ENCODE measurements at regions of chr12 and their contacts with region 1.

Region 1: GRCh38 chr12:50614167-50614759 is 109.5 kb downstream of the DIP2B start:
- DNase-seq: peak in 1 of 2 experiments; percentile 44
- H3K4me3 ChIP-seq: no peak overlapping the region
- H3K4me3 Mint-ChIP-seq: no peak overlapping the region
- H3K27ac Mint-ChIP-seq: no peak overlapping the region
- H3K4me1 ChIP-seq: peaks cover 69% of the 10 kb centered on the region
- H3K4me1 Mint-ChIP-seq: peaks cover 46% of the 10 kb centered on the region
- H3K27me3 ChIP-seq: no peaks in the 10 kb centered on the region
- H3K27me3 Mint-ChIP-seq: no peaks in the 10 kb centered on the region
- CTCF ChIP-seq: no peak

Region 2: GRCh38 chr12:50174971-50175715 is 439.1 kb before region 1 on chr12:
- CTCF ChIA-PET with region 1: no interaction called
- POLR2A ChIA-PET with region 1: no interaction called
- intact Hi-C with region 1: no loop called
- DNase-seq: peak in 1 of 2 experiments; percentile 80
- H3K4me3 ChIP-seq: no peak overlapping the region
- H3K4me3 Mint-ChIP-seq: no peak overlapping the region
- H3K27ac Mint-ChIP-seq: no peak overlapping the region
- H3K4me1 ChIP-seq: peaks cover 6% of the 10 kb centered on the region; the same call in 1 of the 2 replicates
- H3K4me1 Mint-ChIP-seq: no peaks in the 10 kb centered on the region
- H3K27me3 ChIP-seq: no peaks in the 10 kb centered on the region
- H3K27me3 Mint-ChIP-seq: no peaks in the 10 kb centered on the region
- CTCF ChIP-seq: peak; percentile 45 to 72

Region 3: GRCh38 chr12:50542448-50542847 is 71.8 kb before region 1 on chr12:
- CTCF ChIA-PET with region 1: no interaction called
- POLR2A ChIA-PET with region 1: no interaction called
- intact Hi-C with region 1: no loop called
- DNase-seq: no peak
- H3K4me3 ChIP-seq: no peak overlapping the region
- H3K4me3 Mint-ChIP-seq: no peak overlapping the region
- H3K27ac Mint-ChIP-seq: no peak overlapping the region
- H3K4me1 ChIP-seq: peaks cover 36% of the 10 kb centered on the region
- H3K4me1 Mint-ChIP-seq: peaks cover 34% of the 10 kb centered on the region
- H3K27me3 ChIP-seq: no peaks in the 10 kb centered on the region
- H3K27me3 Mint-ChIP-seq: no peaks in the 10 kb centered on the region
- CTCF ChIP-seq: no peak

Region 4: DNA sequence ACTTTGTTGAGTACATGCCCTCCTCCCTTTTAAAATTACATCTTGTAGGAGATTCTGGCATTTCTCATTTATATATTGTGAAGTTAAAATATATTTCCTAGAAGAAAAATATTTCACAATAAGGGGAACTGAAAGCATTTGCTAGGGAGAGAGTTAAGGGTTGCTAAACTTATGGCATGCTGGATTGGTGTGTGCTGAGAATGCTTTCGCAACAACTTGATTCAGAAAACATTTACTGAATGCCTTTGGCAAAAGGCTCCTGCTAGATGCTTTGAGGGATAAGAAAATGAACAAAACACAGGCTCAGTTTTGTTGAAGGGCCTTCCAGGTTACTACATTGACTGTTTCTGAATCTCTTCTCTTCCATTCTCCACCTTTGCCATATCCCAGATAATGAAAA is 42.0 kb before region 1 on chr12:
- CTCF ChIA-PET with region 1: no interaction called
- POLR2A ChIA-PET with region 1: no interaction called
- intact Hi-C with region 1: loop called (anchors 5 kb)
- DNase-seq: peak in 1 of 2 experiments; percentile 58
- H3K4me3 ChIP-seq: no peak overlapping the region
- H3K4me3 Mint-ChIP-seq: no peak overlapping the region
- H3K27ac Mint-ChIP-seq: no peak overlapping the region
- H3K4me1 ChIP-seq: peaks cover 33% of the 10 kb centered on the region
- H3K4me1 Mint-ChIP-seq: peaks cover 23% of the 10 kb centered on the region
- H3K27me3 ChIP-seq: no peaks in the 10 kb centered on the region
- H3K27me3 Mint-ChIP-seq: no peaks in the 10 kb centered on the region
- CTCF ChIP-seq: no peak